Activated CD4-positive, alpha-beta T cell treated with anti-CD3 and anti-CD28 coated beads, Interleukin-2, amount 10 ng/mL, durations not matched to agents 24 days and 14 days (primary cell): ENCODE measurements at regions of chr14 and their contacts with region 1.

Region 1: DNA sequence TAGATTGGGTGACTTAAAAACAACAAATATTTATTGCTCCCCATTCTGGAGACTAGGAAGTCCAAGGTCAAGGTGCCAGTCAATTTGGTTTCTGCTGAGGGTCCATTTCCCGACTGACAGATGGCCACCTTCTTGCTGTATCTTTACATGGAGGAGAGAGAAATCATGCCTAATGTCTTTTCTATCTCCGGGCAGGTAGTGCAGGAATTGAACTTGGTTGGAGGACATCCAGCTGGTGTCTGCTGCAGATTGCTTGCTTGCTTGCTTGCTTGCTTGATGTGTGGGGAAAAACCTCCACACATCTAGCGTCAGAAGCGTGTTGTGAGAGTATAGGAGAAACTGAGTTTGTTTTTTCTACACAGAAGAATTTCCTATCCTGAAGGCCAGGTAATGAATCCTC is 561.4 kb downstream of the DIO2 start:
- DNase-seq: no peak
- H3K4me3 Mint-ChIP-seq: no peak overlapping the region
- H3K27ac Mint-ChIP-seq: no peak overlapping the region
- H3K4me1 Mint-ChIP-seq: no peaks in the 10 kb centered on the region
- H3K27me3 Mint-ChIP-seq: no peaks in the 10 kb centered on the region

Region 2: GRCh38 chr14:79404874-79405511 is 244.9 kb before region 1 on chr14:
- intact Hi-C with region 1: no loop called
- DNase-seq: no peak
- H3K4me3 Mint-ChIP-seq: no peak overlapping the region
- H3K27ac Mint-ChIP-seq: no peak overlapping the region
- H3K4me1 Mint-ChIP-seq: no peaks in the 10 kb centered on the region
- H3K27me3 Mint-ChIP-seq: no peaks in the 10 kb centered on the region

Region 3: GRCh38 chr14:79638672-79639266 is 11.1 kb before region 1 on chr14:
- intact Hi-C with region 1: loop called (anchors 1 kb)
- DNase-seq: no peak
- H3K4me3 Mint-ChIP-seq: no peak overlapping the region
- H3K27ac Mint-ChIP-seq: no peak overlapping the region
- H3K4me1 Mint-ChIP-seq: no peaks in the 10 kb centered on the region
- H3K27me3 Mint-ChIP-seq: no peaks in the 10 kb centered on the region